ENCODE measurements at regions of chr5 and their contacts with region 1.

Region 1: GRCh38 chr5:143837306-143837848 is 25.4 kb downstream of the HMHB1 start:
- DNase-seq: no peak
- ATAC-seq: peak in 1 of 2 donors; percentile 24
- H3K4me3 ChIP-seq: no peak overlapping the region
- H3K27ac ChIP-seq: no peak overlapping the region
- H3K4me1 ChIP-seq: no peaks in the 10 kb centered on the region
- H3K27me3 ChIP-seq: no peaks in the 10 kb centered on the region

Region 2: DNA sequence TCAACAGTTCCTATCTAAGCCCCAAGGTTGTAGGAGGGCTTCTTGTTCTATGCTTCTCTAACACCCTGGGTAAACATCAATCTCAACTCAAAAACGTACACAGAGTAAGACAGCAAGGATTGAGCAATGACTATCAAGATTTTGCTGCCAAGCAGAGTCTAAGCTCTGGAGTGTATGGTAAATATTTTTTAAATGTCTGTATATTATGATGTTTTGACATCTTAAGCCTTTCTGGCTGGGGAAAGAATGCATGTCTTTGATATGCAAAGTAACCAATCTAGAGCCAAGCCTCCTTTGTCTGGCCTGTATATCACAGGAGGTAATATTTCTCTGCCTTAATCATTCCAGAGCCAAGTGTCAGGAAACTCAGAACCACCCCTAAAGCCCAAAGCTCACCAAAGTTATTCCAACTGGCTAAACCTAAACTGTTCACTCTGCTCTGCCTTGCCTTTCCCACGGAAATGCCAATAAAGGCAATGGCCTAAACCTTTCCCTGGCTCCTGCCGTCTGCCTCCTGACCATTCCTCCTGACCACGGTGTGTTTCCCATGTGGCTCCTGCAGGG is 287.9 kb after region 1 on chr5:
- intact Hi-C with region 1: loop called in 1 of 4 experiments (anchors 10 kb)
- DNase-seq: no peak
- ATAC-seq: no peak
- H3K4me3 ChIP-seq: no peak overlapping the region
- H3K27ac ChIP-seq: no peak overlapping the region
- H3K4me1 ChIP-seq: no peaks in the 10 kb centered on the region
- H3K27me3 ChIP-seq: no peaks in the 10 kb centered on the region

Measured in right cardiac atrium (tissue), 5 donors.